Ovary (tissue), 10 donors: ENCODE measurements at regions of chr20 and their contacts with region 1.

Region 1: GRCh38 chr20:42530822-42531448 is 658.8 kb downstream of the PTPRT start:
- DNase-seq: peak in 1 of 5 donors; percentile 17
- H3K4me3 ChIP-seq: no peak overlapping the region
- H3K27ac ChIP-seq: no peak overlapping the region
- H3K4me1 ChIP-seq: no peaks in the 10 kb centered on the region
- H3K27me3 ChIP-seq: no peaks in the 10 kb centered on the region
- CTCF ChIP-seq: peak in 2 of 3 donors; percentile 28
- EP300 ChIP-seq: no peak
- POLR2A ChIP-seq: no peak

Region 2: GRCh38 chr20:40741507-40742106 is 1789.3 kb before region 1 on chr20:
- intact Hi-C with region 1: no loop called
- DNase-seq: no peak
- H3K4me3 ChIP-seq: no peak overlapping the region
- H3K27ac ChIP-seq: no peak overlapping the region
- H3K4me1 ChIP-seq: no peaks in the 10 kb centered on the region
- H3K27me3 ChIP-seq: no peaks in the 10 kb centered on the region
- CTCF ChIP-seq: no peak
- EP300 ChIP-seq: no peak
- POLR2A ChIP-seq: no peak

Region 3: GRCh38 chr20:41722236-41722635 is 808.7 kb before region 1 on chr20:
- intact Hi-C with region 1: loop called in 1 of 4 experiments (anchors 10 kb)
- DNase-seq: no peak
- H3K4me3 ChIP-seq: no peak overlapping the region
- H3K27ac ChIP-seq: no peak overlapping the region
- H3K4me1 ChIP-seq: no peaks in the 10 kb centered on the region
- H3K27me3 ChIP-seq: no peaks in the 10 kb centered on the region
- CTCF ChIP-seq: no peak
- EP300 ChIP-seq: no peak
- POLR2A ChIP-seq: no peak